Endothelial cell of umbilical vein (primary cell): ENCODE measurements at regions of chr17 and their contacts with region 1.

Region 1: GRCh38 chr17:40531051-40531991 is 29.9 kb upstream of the TNS4 start:
- DNase-seq: no peak
- H3K4me3 ChIP-seq: no peak overlapping the region
- H3K27ac ChIP-seq: no peak overlapping the region
- H3K4me1 ChIP-seq: peaks cover 28% of the 10 kb centered on the region
- H3K27me3 ChIP-seq: peaks cover 12 to 22% of the 10 kb centered on the region in 2 experiments
- CTCF ChIP-seq: no peak
- POLR2A ChIP-seq: no peak

Region 2: GRCh38 chr17:40287494-40288369 is 243.6 kb before region 1 on chr17 and contains the start of gene CDC6:
- CTCF ChIA-PET with region 1: interaction called, 3 read pairs
- POLR2A ChIA-PET with region 1: no interaction called
- dilution Hi-C with region 1: no loop called
- intact Hi-C with region 1: loop called (anchors 1 kb)
- DNase-seq: peak; percentile 99
- H3K4me3 ChIP-seq: peak within 1 kb of the TSS; percentile 43 to 72 (median 65)
- H3K27ac ChIP-seq: peak within 1 kb of the TSS; percentile 50
- H3K4me1 ChIP-seq: peaks cover 35% of the 10 kb centered on the region
- H3K27me3 ChIP-seq: no peaks in the 10 kb centered on the region
- CTCF ChIP-seq: no peak
- POLR2A ChIP-seq: peak; percentile 68
- total RNA-seq, gene CDC6: 49.9 and 55.2 TPM in 2 replicates

Region 3: DNA sequence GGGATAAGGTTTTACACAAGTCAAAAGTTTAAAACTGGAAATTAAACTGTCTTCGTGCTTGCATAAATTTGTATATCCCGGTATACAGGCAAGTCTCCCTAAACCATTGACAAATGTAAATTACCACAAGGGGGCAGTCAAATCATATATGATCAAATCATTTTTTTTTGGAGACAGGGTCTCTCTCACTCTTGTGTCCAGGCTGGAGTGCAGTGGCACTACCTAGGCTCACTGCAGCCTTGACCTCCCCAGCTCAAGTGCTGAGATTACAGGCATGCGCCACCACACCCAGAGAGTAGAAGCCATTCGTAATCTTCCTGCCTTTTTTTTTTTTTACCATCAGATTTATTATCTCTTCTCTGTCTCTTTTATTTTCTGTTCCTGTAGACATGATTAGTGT is 132.1 kb before region 1 on chr17:
- CTCF ChIA-PET with region 1: interaction called, 19 read pairs
- POLR2A ChIA-PET with region 1: no interaction called
- dilution Hi-C with region 1: no loop called
- intact Hi-C with region 1: loop called (anchors 1 kb)
- DNase-seq: no peak
- H3K4me3 ChIP-seq: no peak overlapping the region
- H3K27ac ChIP-seq: no peak overlapping the region
- H3K4me1 ChIP-seq: no peaks in the 10 kb centered on the region
- H3K27me3 ChIP-seq: no peaks in the 10 kb centered on the region
- CTCF ChIP-seq: peak; percentile 35 to 44
- POLR2A ChIP-seq: no peak

Region 4: GRCh38 chr17:40443583-40444327 is 87.6 kb before region 1 on chr17:
- CTCF ChIA-PET with region 1: interaction called, 110 read pairs
- POLR2A ChIA-PET with region 1: interaction called, 9 read pairs
- dilution Hi-C with region 1: no loop called
- intact Hi-C with region 1: loop called (anchors 1 kb)
- DNase-seq: peak; percentile 69
- H3K4me3 ChIP-seq: peak overlapping the region; percentile 51 to 92 (median 58)
- H3K27ac ChIP-seq: peak overlapping the region; percentile 43
- H3K4me1 ChIP-seq: peaks cover 40% of the 10 kb centered on the region
- H3K27me3 ChIP-seq: no peaks in the 10 kb centered on the region
- CTCF ChIP-seq: peak; percentile 45 to 76
- POLR2A ChIP-seq: no peak

Region 5: GRCh38 chr17:40499551-40500174 is 31.7 kb before region 1 on chr17:
- CTCF ChIA-PET with region 1: interaction called, 24 read pairs
- POLR2A ChIA-PET with region 1: no interaction called
- dilution Hi-C with region 1: no loop called
- intact Hi-C with region 1: loop called (anchors 1 kb)
- DNase-seq: peak; percentile 58
- H3K4me3 ChIP-seq: no peak overlapping the region
- H3K27ac ChIP-seq: no peak overlapping the region
- H3K4me1 ChIP-seq: peaks cover 7% of the 10 kb centered on the region
- H3K27me3 ChIP-seq: peaks cover 0 to 6% of the 10 kb centered on the region in 2 experiments
- CTCF ChIP-seq: no peak
- POLR2A ChIP-seq: no peak

Region 6: DNA sequence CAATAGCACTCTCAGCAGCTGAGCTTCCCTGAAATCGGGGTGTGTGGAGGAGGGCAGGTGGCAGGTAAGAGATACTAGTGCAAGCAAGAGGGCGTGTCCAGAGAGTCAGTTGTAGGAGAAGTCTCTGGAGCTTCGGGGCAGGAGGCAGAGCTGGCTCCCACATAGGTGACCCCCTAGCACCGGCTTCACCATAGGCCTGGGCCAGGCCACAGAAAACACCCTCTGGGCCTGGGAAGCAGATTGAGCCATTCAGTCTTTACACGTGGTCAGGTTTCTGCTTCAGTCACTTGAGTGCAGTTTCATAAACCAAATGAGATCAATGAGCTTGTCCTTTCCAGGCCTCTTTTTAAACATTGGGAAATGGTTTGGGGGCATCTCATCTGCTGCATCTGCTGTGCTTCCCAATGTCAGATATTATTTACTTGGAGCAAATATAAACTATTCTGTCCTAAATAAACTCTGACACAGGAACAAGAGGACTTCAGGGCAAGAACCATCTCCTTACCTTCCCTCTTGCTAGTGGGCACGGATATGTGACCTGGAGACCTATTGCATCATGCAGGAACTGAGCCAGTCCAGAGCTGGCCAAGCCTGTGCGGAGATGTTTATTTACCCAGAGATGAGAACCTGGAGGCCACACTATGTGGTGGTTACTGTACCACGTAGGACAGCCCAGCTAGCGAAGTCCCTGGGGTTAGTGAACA is 17.8 kb after region 1 on chr17:
- CTCF ChIA-PET with region 1: interaction called, 304 read pairs
- POLR2A ChIA-PET with region 1: no interaction called
- dilution Hi-C with region 1: no loop called
- intact Hi-C with region 1: no loop called
- DNase-seq: peak; percentile 87
- H3K4me3 ChIP-seq: no peak overlapping the region
- H3K27ac ChIP-seq: no peak overlapping the region
- H3K4me1 ChIP-seq: peaks cover 16% of the 10 kb centered on the region
- H3K27me3 ChIP-seq: no peaks in the 10 kb centered on the region
- CTCF ChIP-seq: no peak
- POLR2A ChIP-seq: no peak